ENCODE measurements at regions of chr3 and their contacts with region 1.

Region 1: DNA sequence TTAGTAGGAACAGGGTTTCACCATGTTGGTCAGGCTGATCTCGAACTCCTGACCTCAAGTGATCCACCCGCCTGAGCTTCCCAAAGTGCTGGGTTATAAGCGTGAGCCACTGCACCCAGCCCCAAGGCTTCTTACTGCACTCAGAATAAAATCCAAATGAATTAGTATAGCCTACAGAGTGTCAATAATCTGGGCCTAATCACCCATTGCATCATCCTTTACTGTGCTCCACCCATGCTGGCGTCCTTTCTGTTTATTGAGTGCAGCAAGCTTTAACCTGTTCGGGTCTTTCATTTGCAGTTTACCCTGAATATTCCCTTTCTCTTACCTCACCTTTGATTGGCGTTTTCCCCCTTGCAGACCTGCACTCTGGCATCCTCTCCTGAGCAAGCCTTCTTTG is 77.7 kb downstream of the CEP63 start:
- DNase-seq: no peak

Region 2: DNA sequence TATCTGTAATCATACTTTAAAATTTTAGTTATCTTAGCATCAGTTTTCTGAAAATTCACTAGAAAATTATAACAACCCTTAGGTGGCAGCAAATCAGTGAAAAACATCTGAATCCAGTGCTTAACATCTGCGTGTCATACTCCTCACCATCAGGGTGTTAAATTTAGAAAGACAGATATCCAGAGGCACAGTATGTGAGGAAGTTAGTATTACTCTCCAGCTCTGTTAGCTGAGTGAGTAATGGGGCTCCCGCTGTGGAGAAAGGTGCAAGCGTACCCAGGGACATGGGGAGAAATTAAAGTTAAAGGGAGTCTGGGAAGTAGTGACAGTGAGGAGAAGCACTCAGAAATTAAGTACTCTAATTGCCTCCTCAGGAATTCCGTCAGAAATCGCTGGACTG is 26.8 kb before region 1 on chr3:
- intact Hi-C with region 1: loop called in 1 of 2 experiments (anchors 2 kb)
- DNase-seq: no peak

Region 3: DNA sequence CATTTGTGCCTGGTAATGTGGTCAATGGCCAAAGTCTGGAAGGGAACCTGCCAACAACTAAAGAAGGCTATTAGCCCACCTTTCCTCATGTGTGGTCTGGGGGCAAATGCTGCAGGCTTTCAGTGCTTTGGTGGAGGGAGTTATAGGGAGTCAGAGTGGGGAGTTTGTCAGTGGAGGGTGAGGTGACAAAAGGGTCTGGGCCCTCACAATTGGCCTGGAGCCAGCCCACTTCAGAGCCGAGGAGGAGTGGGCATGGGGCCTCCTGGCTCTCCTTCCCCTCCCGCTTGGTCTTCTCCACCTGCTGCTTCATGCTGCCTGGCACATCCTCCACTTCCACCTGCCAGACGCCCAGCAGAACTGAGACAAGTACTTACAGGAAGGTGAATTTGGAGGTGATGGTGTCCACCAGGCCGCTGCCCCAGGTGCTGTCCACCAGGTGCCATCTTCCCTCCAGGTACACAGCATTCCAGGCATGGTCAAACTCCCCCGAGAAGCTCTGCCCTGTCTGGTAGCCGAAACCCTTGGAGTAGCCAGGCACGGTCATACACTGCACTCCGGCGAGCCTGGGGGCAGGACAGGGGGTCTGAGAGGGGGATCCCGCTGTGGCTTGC is 46.3 kb after region 1 on chr3:
- intact Hi-C with region 1: loop called in 1 of 2 experiments (anchors 2 kb)
- DNase-seq: peak; percentile 71

Measured in posterior vena cava (tissue), 2 donors.